ENCODE measurements at regions of chr1 and their contacts with region 1.

Region 1: GRCh38 chr1:220089650-220090556 is at the start of gene BPNT1:
- DNase-seq: peak; percentile 94 to 100 (median 98)
- ATAC-seq: peak; percentile 76
- H3K4me3 ChIP-seq: peak within 1 kb of the TSS; percentile 80
- H3K4me3 Mint-ChIP-seq: peak within 1 kb of the TSS; percentile 94
- H3K27ac ChIP-seq: peak within 1 kb of the TSS; percentile 58 to 61
- H3K27ac Mint-ChIP-seq: peak within 1 kb of the TSS; percentile 79
- H3K4me1 ChIP-seq: peaks cover 20% of the 10 kb centered on the region
- H3K4me1 Mint-ChIP-seq: peaks cover 24% of the 10 kb centered on the region
- H3K27me3 ChIP-seq: no peaks in the 10 kb centered on the region
- H3K27me3 Mint-ChIP-seq: no peaks in the 10 kb centered on the region
- CTCF ChIP-seq: no peak
- total RNA-seq, gene BPNT1: 1.1 to 2.5 TPM

Region 2: DNA sequence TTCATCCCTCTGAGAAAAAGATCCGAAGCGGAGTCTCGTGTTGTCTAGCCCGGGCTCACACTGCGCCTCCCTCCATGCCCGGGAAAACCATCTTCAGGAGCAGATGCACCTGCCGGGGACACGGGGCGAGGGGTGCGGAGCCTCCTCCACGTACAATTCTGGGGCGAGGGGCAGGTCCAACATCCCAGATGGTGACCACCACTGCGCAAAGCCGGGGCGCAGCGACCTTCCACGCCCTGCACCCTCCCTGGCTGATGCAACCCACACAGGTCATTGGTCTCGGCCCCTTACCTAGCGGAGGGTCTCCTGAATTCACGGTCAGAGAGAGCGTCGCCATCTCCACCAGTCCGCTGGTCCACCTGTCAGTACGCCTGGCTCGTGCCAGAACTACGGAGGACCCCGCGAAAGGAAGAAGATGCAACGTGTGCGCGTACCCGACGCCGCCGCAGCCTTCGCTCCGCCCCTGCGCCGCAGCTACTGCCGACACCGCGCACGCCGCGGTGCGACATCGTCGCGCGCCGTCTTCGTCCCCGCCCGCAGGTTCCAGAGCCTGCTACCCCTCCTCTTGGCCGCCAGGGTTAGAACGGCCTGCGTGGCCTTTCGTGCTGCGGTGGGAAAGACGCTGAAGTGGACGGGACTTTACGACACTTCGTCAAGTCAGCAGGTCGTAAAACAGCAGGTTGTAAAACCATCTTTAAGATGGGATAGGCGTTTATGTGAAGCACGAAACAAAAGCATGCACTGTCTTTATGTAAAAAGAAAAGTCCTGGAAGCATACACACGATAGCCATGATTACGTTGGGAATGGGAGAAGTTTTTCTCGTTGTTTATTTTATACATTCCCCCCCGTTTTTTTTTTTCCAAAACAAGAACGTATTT is 43.6 kb before region 1 on chr1 and contains the start of gene EPRS1:
- CTCF ChIA-PET with region 1: interaction called, 11 read pairs
- POLR2A ChIA-PET with region 1: interaction called, 22 read pairs
- intact Hi-C with region 1: loop called (anchors 1 to 2 kb)
- DNase-seq: peak; percentile 86 to 99 (median 93)
- ATAC-seq: peak; percentile 98
- H3K4me3 ChIP-seq: peak within 1 kb of the TSS; percentile 99
- H3K4me3 Mint-ChIP-seq: peak within 1 kb of the TSS; percentile 97
- H3K27ac ChIP-seq: peak within 1 kb of the TSS; percentile 74 to 82
- H3K27ac Mint-ChIP-seq: peak within 1 kb of the TSS; percentile 91
- H3K4me1 ChIP-seq: peaks cover 19% of the 10 kb centered on the region
- H3K4me1 Mint-ChIP-seq: peaks cover 37% of the 10 kb centered on the region
- H3K27me3 ChIP-seq: no peaks in the 10 kb centered on the region
- H3K27me3 Mint-ChIP-seq: no peaks in the 10 kb centered on the region
- CTCF ChIP-seq: peak; percentile 66
- total RNA-seq, gene EPRS1: 37.4 to 39.6 TPM

Region 3: DNA sequence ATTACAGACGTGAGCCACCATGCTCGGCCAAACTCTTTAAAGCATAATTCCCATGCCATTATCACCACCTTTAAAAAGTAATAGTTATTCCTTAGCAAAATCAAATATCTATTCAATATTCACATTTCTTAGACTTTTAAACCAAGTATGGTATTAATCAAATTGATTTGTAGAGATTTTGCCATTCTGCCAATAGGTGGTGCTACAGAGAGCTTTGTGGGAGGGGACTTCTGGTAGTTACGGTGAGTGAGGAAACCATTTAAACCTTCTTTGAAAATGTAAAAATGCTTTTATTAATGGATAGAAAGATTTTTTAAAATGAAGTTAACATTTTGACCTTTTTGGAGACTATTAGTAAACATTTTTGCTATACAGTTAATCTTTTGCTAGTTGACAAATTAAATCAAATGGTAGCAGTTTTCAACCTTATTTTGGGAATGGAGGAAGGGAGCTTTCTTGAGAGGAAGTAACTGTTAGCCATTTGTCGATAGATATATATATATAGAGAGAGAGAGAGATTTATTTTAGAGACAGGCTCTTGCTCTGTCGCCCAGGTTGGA is 23.3 kb after region 1 on chr1:
- CTCF ChIA-PET with region 1: interaction called, 14 read pairs
- POLR2A ChIA-PET with region 1: no interaction called
- intact Hi-C with region 1: no loop called
- DNase-seq: peak in 5 of 14 experiments; percentile 9 to 72 (median 62)
- ATAC-seq: peak; percentile 78
- H3K4me3 ChIP-seq: no peak overlapping the region
- H3K4me3 Mint-ChIP-seq: no peak overlapping the region
- H3K27ac ChIP-seq: no peak overlapping the region
- H3K27ac Mint-ChIP-seq: no peak overlapping the region
- H3K4me1 ChIP-seq: no peaks in the 10 kb centered on the region
- H3K4me1 Mint-ChIP-seq: peaks cover 9% of the 10 kb centered on the region
- H3K27me3 ChIP-seq: no peaks in the 10 kb centered on the region
- H3K27me3 Mint-ChIP-seq: no peaks in the 10 kb centered on the region
- CTCF ChIP-seq: peak; percentile 69

Region 4: GRCh38 chr1:220272047-220272840 is 182.3 kb after region 1 on chr1 and contains the start of gene RAB3GAP2:
- CTCF ChIA-PET with region 1: no interaction called
- POLR2A ChIA-PET with region 1: interaction called, 3 read pairs
- intact Hi-C with region 1: loop called in 1 of 2 experiments (anchors 2 kb)
- DNase-seq: peak; percentile 93 to 99 (median 96)
- ATAC-seq: peak; percentile 91
- H3K4me3 ChIP-seq: peak within 1 kb of the TSS; percentile 87
- H3K4me3 Mint-ChIP-seq: no peak within 1 kb of the TSS
- H3K27ac ChIP-seq: peak within 1 kb of the TSS; percentile 81 to 87
- H3K27ac Mint-ChIP-seq: no peak within 1 kb of the TSS
- H3K4me1 ChIP-seq: peaks cover 18% of the 10 kb centered on the region
- H3K4me1 Mint-ChIP-seq: peaks cover 18% of the 10 kb centered on the region
- H3K27me3 ChIP-seq: no peaks in the 10 kb centered on the region
- H3K27me3 Mint-ChIP-seq: peaks cover 5% of the 10 kb centered on the region
- CTCF ChIP-seq: no peak
- total RNA-seq, gene RAB3GAP2: 34.7 to 39.4 TPM

Measured in CD4-positive, alpha-beta T cell (primary cell).